Aorta (tissue), 5 donors: ENCODE measurements at regions of chr5 and their contacts with region 1.

Region 1: GRCh38 chr5:139417214-139417613 is 13.3 kb upstream of the SPATA24 start:
- DNase-seq: no peak
- ATAC-seq: peak; percentile 74
- H3K4me3 ChIP-seq: no peak overlapping the region
- H3K27ac ChIP-seq: no peak overlapping the region
- H3K4me1 ChIP-seq: no peaks in the 10 kb centered on the region
- H3K27me3 ChIP-seq: no peaks in the 10 kb centered on the region

Region 2: DNA sequence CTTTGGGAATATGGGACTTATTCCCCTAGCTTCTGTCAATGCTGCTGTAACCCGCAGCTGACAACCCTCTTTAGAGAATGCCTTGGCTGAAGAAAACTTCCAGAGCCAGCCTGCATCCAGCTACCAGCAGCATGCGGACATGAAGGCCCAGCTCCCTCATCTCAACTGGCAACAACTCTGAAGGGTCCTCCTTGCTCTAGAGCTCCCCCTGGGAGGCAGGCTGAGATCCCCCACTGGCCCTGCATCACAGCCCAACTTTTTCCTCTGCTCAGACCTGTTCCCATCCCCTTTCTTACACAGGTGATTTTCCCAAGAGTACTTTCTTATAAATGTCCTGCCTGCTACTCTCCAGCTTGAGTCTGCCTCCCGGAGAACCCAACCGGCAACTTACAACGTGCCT is 1352.1 kb before region 1 on chr5:
- intact Hi-C with region 1: no loop called
- DNase-seq: no peak
- ATAC-seq: no peak
- H3K4me3 ChIP-seq: no peak overlapping the region
- H3K27ac ChIP-seq: no peak overlapping the region
- H3K4me1 ChIP-seq: no peaks in the 10 kb centered on the region
- H3K27me3 ChIP-seq: no peaks in the 10 kb centered on the region

Region 3: GRCh38 chr5:139560752-139561654 is 143.8 kb after region 1 on chr5 and contains the start of gene UBE2D2:
- intact Hi-C with region 1: loop called in 1 of 2 experiments (anchors 5 kb)
- DNase-seq: peak; percentile 99 to 100
- ATAC-seq: peak; percentile 99
- H3K4me3 ChIP-seq: peak within 1 kb of the TSS; percentile 87 to 98
- H3K27ac ChIP-seq: peak within 1 kb of the TSS; percentile 87 to 88
- H3K4me1 ChIP-seq: no peaks in the 10 kb centered on the region
- H3K27me3 ChIP-seq: no peaks in the 10 kb centered on the region
- total RNA-seq, gene UBE2D2: 96.8 to 116 TPM